Heart left ventricle (tissue), 16 donors: ENCODE measurements at regions of chr22 and their contacts with region 1.

Region 1: GRCh38 chr22:39514373-39514973 is 5.9 kb upstream of the ATF4 start:
- DNase-seq: peak in 2 of 5 donors; percentile 62 to 72
- ATAC-seq: peak in 2 of 4 donors; percentile 3 to 6
- H3K4me3 ChIP-seq: no peak overlapping the region
- H3K27ac ChIP-seq: peak overlapping the region in 2 of 12 donors; percentile 11 to 28
- H3K4me1 ChIP-seq: peaks cover 3 to 28% (median 14%) of the 10 kb centered on the region in 12 donors
- H3K27me3 ChIP-seq: no peaks in the 10 kb centered on the region
- CTCF ChIP-seq: peak; percentile 48 to 81 (median 74)
- POLR2A ChIP-seq: no peak

Region 2: DNA sequence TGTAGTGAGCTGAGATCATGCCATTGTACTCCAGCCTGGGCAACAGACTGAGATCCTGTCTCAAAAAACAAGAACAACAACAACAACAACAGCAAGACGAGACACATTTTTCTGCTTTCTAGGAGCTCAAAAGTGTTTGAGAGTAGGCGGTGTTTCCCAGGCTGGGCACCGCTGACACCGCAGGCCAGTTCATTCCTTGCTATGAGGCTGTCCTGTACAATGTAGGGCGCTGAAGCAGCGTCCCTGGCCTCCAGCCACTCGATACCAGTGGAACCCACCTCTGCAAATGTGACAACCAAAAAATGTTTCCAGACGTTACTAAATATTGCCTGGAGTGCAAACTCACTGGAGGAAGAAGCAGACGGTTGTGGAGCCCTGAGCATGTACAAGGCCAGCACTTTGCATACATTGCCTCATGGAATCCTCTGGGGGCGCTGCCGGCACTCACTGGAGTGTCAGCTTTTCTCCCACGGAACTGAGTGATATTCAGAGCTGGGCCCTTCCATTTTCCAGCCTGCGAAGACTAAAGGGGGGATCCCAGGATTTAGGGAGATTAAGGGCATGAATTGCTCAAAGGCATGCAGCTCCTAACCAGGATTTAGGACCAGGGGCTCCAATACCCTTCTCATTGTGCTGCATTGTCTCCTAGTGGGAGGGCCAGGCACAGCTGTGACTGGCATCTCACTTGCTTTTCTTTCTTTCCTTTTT is 18.2 kb before region 1 on chr22:
- intact Hi-C with region 1: loop called in 1 of 10 experiments (anchors 2 kb)
- DNase-seq: peak; percentile 77 to 88 (median 82)
- ATAC-seq: peak in 3 of 4 donors; percentile 72 to 77 (median 74)
- H3K4me3 ChIP-seq: no peak overlapping the region
- H3K27ac ChIP-seq: peak overlapping the region in 6 of 12 donors; percentile 21 to 47 (median 28)
- H3K4me1 ChIP-seq: peaks cover 5 to 59% (median 26%) of the 10 kb centered on the region in 12 donors
- H3K27me3 ChIP-seq: no peaks in the 10 kb centered on the region
- CTCF ChIP-seq: peak; percentile 66 to 88 (median 78)
- POLR2A ChIP-seq: no peak